ENCODE measurements at regions of chr20 and their contacts with region 1.

Region 1: GRCh38 chr20:44521484-44522481 is at the start of gene SERINC3:
- DNase-seq: peak; percentile 98
- ATAC-seq: peak; percentile 99
- H3K4me3 ChIP-seq: peak within 1 kb of the TSS; percentile 89 to 98 (median 95)
- H3K4me3 Mint-ChIP-seq: peak within 1 kb of the TSS; percentile 97
- H3K27ac ChIP-seq: peak within 1 kb of the TSS; percentile 94 to 95
- H3K27ac Mint-ChIP-seq: peak within 1 kb of the TSS; percentile 94
- H3K4me1 ChIP-seq: peaks cover 18 to 25% of the 10 kb centered on the region in 2 donors
- H3K4me1 Mint-ChIP-seq: peaks cover 51% of the 10 kb centered on the region
- H3K27me3 ChIP-seq: no peaks in the 10 kb centered on the region
- H3K27me3 Mint-ChIP-seq: peaks cover 1% of the 10 kb centered on the region
- CTCF ChIP-seq: no peak
- total RNA-seq, gene SERINC3: 51.6 and 56.7 TPM in 2 replicates

Region 2: DNA sequence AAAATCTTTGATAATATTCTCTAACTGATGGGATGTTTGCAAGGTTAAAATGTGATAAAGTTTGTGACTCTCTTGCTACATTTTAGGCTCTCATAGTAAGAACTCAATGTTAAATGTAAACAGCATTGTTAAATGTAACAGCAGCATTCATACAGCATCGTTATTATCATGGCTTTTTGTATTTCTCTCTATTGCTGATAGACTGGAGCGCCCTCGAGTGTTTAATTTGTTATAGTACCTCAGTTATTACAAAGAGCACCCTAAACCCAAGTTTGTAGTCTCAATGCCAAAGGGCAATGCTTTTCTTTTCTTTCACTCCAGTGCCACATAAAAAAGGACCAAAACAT is 61.0 kb before region 1 on chr20:
- CTCF ChIA-PET with region 1: no interaction called
- POLR2A ChIA-PET with region 1: no interaction called
- intact Hi-C with region 1: no loop called
- DNase-seq: no peak
- ATAC-seq: no peak
- H3K4me3 ChIP-seq: no peak overlapping the region
- H3K4me3 Mint-ChIP-seq: no peak overlapping the region
- H3K27ac ChIP-seq: no peak overlapping the region
- H3K27ac Mint-ChIP-seq: no peak overlapping the region
- H3K4me1 ChIP-seq: no peaks in the 10 kb centered on the region
- H3K4me1 Mint-ChIP-seq: no peaks in the 10 kb centered on the region
- H3K27me3 ChIP-seq: no peaks in the 10 kb centered on the region
- H3K27me3 Mint-ChIP-seq: no peaks in the 10 kb centered on the region
- CTCF ChIP-seq: no peak

Region 3: GRCh38 chr20:44475694-44476560 is 45.9 kb before region 1 on chr20 and contains the start of gene TTPAL:
- CTCF ChIA-PET with region 1: no interaction called
- POLR2A ChIA-PET with region 1: interaction called, 3 read pairs
- intact Hi-C with region 1: loop called (anchors 1 kb)
- DNase-seq: peak; percentile 93
- ATAC-seq: peak; percentile 94
- H3K4me3 ChIP-seq: peak within 1 kb of the TSS; percentile 70 to 99 (median 78)
- H3K4me3 Mint-ChIP-seq: peak within 1 kb of the TSS; percentile 97
- H3K27ac ChIP-seq: peak within 1 kb of the TSS; percentile 90 to 93
- H3K27ac Mint-ChIP-seq: peak within 1 kb of the TSS; percentile 95
- H3K4me1 ChIP-seq: peaks cover 23 to 34% of the 10 kb centered on the region in 2 donors
- H3K4me1 Mint-ChIP-seq: peaks cover 43% of the 10 kb centered on the region
- H3K27me3 ChIP-seq: no peaks in the 10 kb centered on the region
- H3K27me3 Mint-ChIP-seq: peaks cover 2% of the 10 kb centered on the region
- CTCF ChIP-seq: no peak
- total RNA-seq, gene TTPAL: 26.8 and 27.8 TPM in 2 replicates

Region 4: GRCh38 chr20:44504402-44505315 is 17.1 kb before region 1 on chr20:
- CTCF ChIA-PET with region 1: no interaction called
- POLR2A ChIA-PET with region 1: no interaction called
- intact Hi-C with region 1: no loop called
- DNase-seq: no peak
- ATAC-seq: no peak
- H3K4me3 ChIP-seq: no peak overlapping the region
- H3K4me3 Mint-ChIP-seq: no peak overlapping the region
- H3K27ac ChIP-seq: no peak overlapping the region
- H3K27ac Mint-ChIP-seq: no peak overlapping the region
- H3K4me1 ChIP-seq: no peaks in the 10 kb centered on the region
- H3K4me1 Mint-ChIP-seq: no peaks in the 10 kb centered on the region
- H3K27me3 ChIP-seq: no peaks in the 10 kb centered on the region
- H3K27me3 Mint-ChIP-seq: no peaks in the 10 kb centered on the region
- CTCF ChIP-seq: no peak

Region 5: GRCh38 chr20:44532259-44532980 is 10.6 kb after region 1 on chr20:
- CTCF ChIA-PET with region 1: interaction called, 4 read pairs
- POLR2A ChIA-PET with region 1: no interaction called
- intact Hi-C with region 1: loop called (anchors 1 kb)
- DNase-seq: peak; percentile 16
- ATAC-seq: no peak
- H3K4me3 ChIP-seq: peak overlapping the region; percentile 30 to 86 (median 64)
- H3K4me3 Mint-ChIP-seq: no peak overlapping the region
- H3K27ac ChIP-seq: peak overlapping the region in 1 of 2 donors; percentile 51
- H3K27ac Mint-ChIP-seq: no peak overlapping the region
- H3K4me1 ChIP-seq: peaks cover 11 to 16% of the 10 kb centered on the region in 2 donors
- H3K4me1 Mint-ChIP-seq: peaks cover 6% of the 10 kb centered on the region
- H3K27me3 ChIP-seq: no peaks in the 10 kb centered on the region
- H3K27me3 Mint-ChIP-seq: no peaks in the 10 kb centered on the region
- CTCF ChIP-seq: no peak

Region 6: GRCh38 chr20:44582311-44583025 is 60.7 kb after region 1 on chr20 and contains the start of gene PKIG:
- CTCF ChIA-PET with region 1: interaction called, 5 read pairs
- POLR2A ChIA-PET with region 1: interaction called, 6 read pairs
- intact Hi-C with region 1: loop called (anchors 1 kb)
- DNase-seq: peak; percentile 57
- ATAC-seq: no peak
- H3K4me3 ChIP-seq: peak within 1 kb of the TSS; percentile 57 to 94 (median 76)
- H3K4me3 Mint-ChIP-seq: peak within 1 kb of the TSS; percentile 92
- H3K27ac ChIP-seq: peak within 1 kb of the TSS; percentile 85 to 89
- H3K27ac Mint-ChIP-seq: peak within 1 kb of the TSS; percentile 91
- H3K4me1 ChIP-seq: peaks cover 68 to 79% of the 10 kb centered on the region in 2 donors
- H3K4me1 Mint-ChIP-seq: peaks cover 86% of the 10 kb centered on the region
- H3K27me3 ChIP-seq: no peaks in the 10 kb centered on the region
- H3K27me3 Mint-ChIP-seq: no peaks in the 10 kb centered on the region
- CTCF ChIP-seq: no peak
- total RNA-seq, gene PKIG: 117 and 128 TPM in 2 replicates

Region 7: GRCh38 chr20:44642203-44643153 is 120.7 kb after region 1 on chr20:
- CTCF ChIA-PET with region 1: no interaction called
- POLR2A ChIA-PET with region 1: interaction called, 10 read pairs
- intact Hi-C with region 1: loop called (anchors 5 kb)
- DNase-seq: peak; percentile 59
- ATAC-seq: no peak
- H3K4me3 ChIP-seq: no peak overlapping the region
- H3K4me3 Mint-ChIP-seq: peak overlapping the region; percentile 71
- H3K27ac ChIP-seq: peak overlapping the region; percentile 50 to 74
- H3K27ac Mint-ChIP-seq: peak overlapping the region; percentile 84
- H3K4me1 ChIP-seq: peaks cover 47 to 61% of the 10 kb centered on the region in 2 donors
- H3K4me1 Mint-ChIP-seq: peaks cover 62% of the 10 kb centered on the region
- H3K27me3 ChIP-seq: no peaks in the 10 kb centered on the region
- H3K27me3 Mint-ChIP-seq: no peaks in the 10 kb centered on the region
- CTCF ChIP-seq: no peak